Dorsolateral prefrontal cortex (tissue), 120 donors: ENCODE measurements at regions of chr7 and their contacts with region 1.

Region 1: GRCh38 chr7:156515911-156516790 is 124.4 kb upstream of the RNF32 start:
- DNase-seq: peak in 3 of 10 donors; percentile 16 to 47 (median 20)
- H3K4me3 ChIP-seq: peak overlapping the region in 8 of 59 donors; percentile 5 to 35 (median 18)
- H3K27ac ChIP-seq: peak overlapping the region in 1 of 59 donors; percentile 6
- H3K27me3 ChIP-seq: no peaks in the 10 kb centered on the region
- CTCF ChIP-seq: peak in 39 of 56 donors; percentile 9 to 67 (median 34)

Region 2: DNA sequence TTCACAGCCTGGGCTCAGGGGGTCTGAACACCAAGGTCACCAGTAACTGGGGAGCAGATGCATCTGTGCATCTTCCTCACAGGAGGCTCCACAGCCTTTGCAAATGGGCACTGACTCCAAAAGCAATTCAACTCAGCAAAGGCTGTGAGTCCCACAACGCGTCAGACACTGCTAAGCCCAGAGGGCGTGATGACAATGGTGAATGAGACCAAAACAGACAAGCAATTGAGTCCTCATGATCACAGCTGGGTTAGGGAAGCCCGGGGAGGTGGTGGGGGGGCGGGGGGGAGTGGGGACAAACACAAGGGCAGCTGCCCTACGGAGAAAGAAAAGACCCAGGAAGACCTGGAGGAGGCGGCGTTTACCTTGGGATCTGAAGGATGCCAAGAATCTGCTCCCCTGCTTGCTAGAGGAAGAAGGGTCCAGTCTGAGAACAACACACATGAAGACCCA is 62.9 kb after region 1 on chr7:
- intact Hi-C with region 1: loop called (anchors 5 to 10 kb)
- DNase-seq: peak in 7 of 10 donors; percentile 49 to 84 (median 69)
- H3K4me3 ChIP-seq: peak overlapping the region in 56 of 59 donors; percentile 14 to 69 (median 46)
- H3K27ac ChIP-seq: peak overlapping the region; percentile 41 to 97 (median 91)
- H3K27me3 ChIP-seq: no peaks in the 10 kb centered on the region
- CTCF ChIP-seq: peak in 2 of 56 donors; percentile 8 to 23

Region 3: DNA sequence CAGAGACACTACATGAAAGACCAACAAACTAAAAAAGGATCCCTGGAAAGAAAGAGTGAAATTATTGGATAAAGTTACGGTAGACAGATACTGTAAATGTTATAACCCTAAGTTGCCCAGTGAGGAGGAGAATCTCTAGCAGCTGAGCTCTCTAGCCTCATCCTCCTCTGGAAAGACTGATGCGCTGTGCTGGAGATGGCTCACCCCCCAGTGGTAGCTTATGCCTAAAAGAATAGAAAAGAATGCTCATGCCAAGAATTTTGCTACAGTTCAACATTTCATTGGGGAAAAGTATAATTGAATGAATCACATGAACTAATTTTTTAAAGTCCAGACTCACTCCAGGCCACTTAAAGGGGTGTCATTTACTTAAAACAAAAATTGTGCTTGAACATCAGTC is 73.7 kb after region 1 on chr7:
- intact Hi-C with region 1: loop called in 1 of 2 experiments (anchors 5 kb)
- DNase-seq: no peak
- H3K4me3 ChIP-seq: no peak overlapping the region
- H3K27ac ChIP-seq: peak overlapping the region in 2 of 59 donors; percentile 16 to 61
- H3K27me3 ChIP-seq: no peaks in the 10 kb centered on the region
- CTCF ChIP-seq: peak in 41 of 56 donors; percentile 13 to 62 (median 32)

Region 4: DNA sequence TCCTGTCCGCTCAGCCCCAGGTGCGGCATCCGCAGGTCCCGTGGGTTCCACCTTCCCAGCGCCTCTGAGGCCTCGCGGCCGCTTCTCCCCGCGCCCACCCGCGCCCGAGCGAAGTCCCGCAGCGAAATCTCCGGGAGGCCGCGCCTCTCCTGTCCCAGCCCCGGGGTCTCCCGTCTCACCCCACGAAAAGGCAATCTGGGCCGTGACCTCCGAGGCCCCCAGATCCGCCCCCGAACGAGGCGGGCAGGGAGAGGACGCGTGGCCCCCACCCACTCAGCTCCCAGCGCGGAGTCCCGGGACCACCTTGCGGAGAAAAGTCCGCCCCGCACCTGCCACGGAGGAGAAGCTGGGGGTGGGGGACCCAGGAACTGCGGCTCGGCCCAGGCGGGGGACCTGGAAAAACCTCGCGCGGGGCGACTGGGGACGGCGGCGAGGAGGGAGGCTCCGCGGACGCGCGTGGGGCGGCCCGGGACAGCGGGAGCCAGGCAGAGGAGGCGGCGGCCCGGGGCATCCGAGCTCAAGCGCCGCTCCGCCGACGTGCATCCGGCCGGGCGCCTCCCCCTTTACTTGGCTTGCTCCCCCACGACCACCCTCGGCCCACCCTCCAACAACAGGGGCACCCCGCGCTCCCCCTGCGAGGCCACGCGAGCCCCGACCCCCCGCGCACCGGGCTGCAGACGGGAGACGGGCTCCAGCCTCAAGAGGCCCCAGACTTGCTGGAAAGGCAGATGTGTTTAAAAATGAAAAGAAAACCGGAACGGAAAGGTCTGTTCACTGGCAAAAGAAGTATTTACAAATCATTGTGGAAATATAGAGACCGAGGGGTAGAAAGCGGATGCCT is 91.4 kb after region 1 on chr7:
- intact Hi-C with region 1: no loop called
- DNase-seq: no peak
- H3K4me3 ChIP-seq: peak overlapping the region in 58 of 59 donors; percentile 10 to 68 (median 53)
- H3K27ac ChIP-seq: peak overlapping the region in 1 of 59 donors; percentile 1
- H3K27me3 ChIP-seq: peaks cover 0 to 13% (median 0%) of the 10 kb centered on the region in 45 donors
- CTCF ChIP-seq: no peak

Region 5: DNA sequence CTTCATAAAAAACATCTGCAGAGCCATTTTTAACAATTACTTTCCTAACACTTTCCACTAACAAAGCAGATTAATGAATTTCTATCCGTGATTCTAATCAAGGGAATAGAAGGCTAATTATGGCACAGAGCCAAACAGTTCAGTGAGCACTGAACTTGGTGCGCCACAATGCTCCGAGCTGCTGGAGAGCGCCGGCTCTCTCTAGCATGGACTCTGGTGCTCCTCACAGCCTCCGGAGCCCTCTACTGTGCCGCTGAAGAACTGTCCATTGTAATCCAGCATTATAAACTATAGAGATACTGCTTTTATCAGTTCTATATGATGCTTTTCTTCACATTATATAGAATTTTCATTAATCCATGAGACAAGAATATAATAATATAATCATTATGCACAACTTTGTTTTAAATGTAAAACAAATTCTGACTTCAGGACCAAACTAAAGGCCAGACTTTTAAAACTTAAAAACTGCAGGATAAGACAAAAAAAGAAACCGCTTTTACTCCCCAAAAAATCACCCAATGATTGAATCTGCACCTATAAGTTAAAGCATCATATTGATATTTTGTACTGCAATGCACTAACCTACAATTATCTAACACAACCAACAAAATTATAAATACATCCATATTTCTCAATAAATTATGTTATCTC is 248.0 kb after region 1 on chr7:
- intact Hi-C with region 1: loop called in 1 of 2 experiments (anchors 5 kb)
- DNase-seq: peak; percentile 47 to 80 (median 76)
- H3K4me3 ChIP-seq: no peak overlapping the region
- H3K27ac ChIP-seq: no peak overlapping the region
- H3K27me3 ChIP-seq: no peaks in the 10 kb centered on the region
- CTCF ChIP-seq: peak; percentile 22 to 98 (median 80)